Naive thymus-derived CD4-positive, alpha-beta T cell (primary cell): ENCODE measurements at regions of chr5 and their contacts with region 1.

Region 1: GRCh38 chr5:141512390-141512910 is 23.6 kb downstream of the PCDHGC5 start:
- DNase-seq: peak; percentile 48 to 87 (median 74)
- ATAC-seq: peak; percentile 79
- H3K4me3 ChIP-seq: peak overlapping the region; percentile 59
- H3K4me3 Mint-ChIP-seq: peak overlapping the region; percentile 84 to 97 (median 90)
- H3K27ac ChIP-seq: peak overlapping the region; percentile 39
- H3K27ac Mint-ChIP-seq: peak overlapping the region; percentile 27 to 83 (median 58)
- H3K4me1 ChIP-seq: peaks cover 0 to 13% of the 10 kb centered on the region in 2 donors
- H3K4me1 Mint-ChIP-seq: peaks cover 21 to 35% (median 26%) of the 10 kb centered on the region in 7 donors
- H3K27me3 ChIP-seq: no peaks in the 10 kb centered on the region
- H3K27me3 Mint-ChIP-seq: peaks cover 0 to 3% (median 0%) of the 10 kb centered on the region in 5 donors

Region 2: DNA sequence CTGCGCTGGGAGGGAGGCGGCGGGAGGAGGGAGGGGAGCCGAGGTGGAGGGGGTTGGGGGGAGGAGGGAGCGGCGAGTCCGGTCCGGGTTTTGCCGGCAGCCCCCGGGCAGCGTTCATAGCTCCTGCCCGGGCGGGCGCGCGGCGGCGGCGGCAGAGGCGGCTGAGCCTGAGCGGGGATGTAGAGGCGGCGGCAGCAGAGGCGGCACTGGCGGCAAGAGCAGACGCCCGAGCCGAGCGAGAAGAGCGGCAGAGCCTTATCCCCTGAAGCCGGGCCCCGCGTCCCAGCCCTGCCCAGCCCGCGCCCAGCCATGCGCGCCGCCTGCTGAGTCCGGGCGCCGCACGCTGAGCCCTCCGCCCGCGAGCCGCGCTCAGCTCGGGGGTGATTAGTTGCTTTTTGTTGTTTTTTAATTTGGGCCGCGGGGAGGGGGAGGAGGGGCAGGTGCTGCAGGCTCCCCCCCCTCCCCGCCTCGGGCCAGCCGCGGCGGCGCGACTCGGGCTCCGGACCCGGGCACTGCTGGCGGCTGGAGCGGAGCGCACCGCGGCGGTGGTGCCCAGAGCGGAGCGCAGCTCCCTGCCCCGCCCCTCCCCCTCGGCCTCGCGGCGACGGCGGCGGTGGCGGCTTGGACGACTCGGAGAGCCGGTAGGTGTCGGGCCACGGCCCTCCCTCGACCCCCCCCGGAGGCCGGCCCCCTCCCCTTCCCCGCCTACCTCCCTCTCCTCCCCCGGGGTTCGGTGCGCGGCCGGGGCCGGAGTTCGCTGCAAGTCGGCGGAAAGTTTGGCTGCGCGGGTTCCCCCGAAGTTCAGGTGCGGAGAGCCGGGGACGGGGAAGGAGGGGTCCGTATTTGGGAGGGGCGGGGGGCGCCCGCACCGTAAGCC is 1864.0 kb before region 1 on chr5 and contains the start of gene CXXC5:
- CTCF ChIA-PET with region 1: no interaction called
- POLR2A ChIA-PET with region 1: no interaction called
- intact Hi-C with region 1: no loop called
- DNase-seq: peak in 5 of 9 donors; percentile 33 to 67 (median 44)
- ATAC-seq: peak; percentile 58
- H3K4me3 ChIP-seq: peak within 1 kb of the TSS; percentile 43
- H3K4me3 Mint-ChIP-seq: peak within 1 kb of the TSS; percentile 33 to 94 (median 78)
- H3K27ac ChIP-seq: no peak within 1 kb of the TSS
- H3K27ac Mint-ChIP-seq: no peak within 1 kb of the TSS
- H3K4me1 ChIP-seq: peaks cover 19 to 39% of the 10 kb centered on the region in 2 donors
- H3K4me1 Mint-ChIP-seq: peaks cover 15 to 52% (median 32%) of the 10 kb centered on the region in 7 donors
- H3K27me3 ChIP-seq: peaks cover 3 to 30% of the 10 kb centered on the region in 2 donors
- H3K27me3 Mint-ChIP-seq: peaks cover 30 to 70% (median 42%) of the 10 kb centered on the region in 5 donors
- total RNA-seq, gene CXXC5: 0.73 to 21.4 (median 3.5) TPM

Region 3: DNA sequence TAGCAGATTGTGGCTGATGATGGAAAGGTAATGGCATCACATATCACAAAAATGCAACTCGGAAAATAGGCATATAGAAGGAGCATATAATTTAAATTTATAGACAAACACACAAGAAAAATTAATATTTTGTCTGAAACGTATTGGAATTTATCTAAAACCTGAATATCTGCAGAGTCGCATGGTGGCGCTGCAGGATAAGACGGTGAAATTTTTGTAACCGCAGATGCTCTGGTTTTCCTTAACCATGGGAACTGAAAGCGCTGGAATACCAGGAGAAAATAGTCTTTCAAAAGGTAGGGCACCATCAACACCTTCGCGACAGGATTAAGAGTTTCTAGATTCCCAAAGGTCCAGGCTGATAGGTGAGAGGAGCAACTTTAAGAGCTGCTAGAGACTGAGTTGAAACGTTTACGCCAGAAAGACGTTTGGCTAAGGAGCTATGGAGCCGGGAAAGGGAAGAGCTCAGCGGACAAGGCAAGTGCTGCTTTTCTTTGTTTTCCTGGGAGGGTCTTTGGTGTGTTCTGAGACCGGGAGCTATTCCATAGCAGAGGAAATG is 278.3 kb before region 1 on chr5:
- CTCF ChIA-PET with region 1: no interaction called
- POLR2A ChIA-PET with region 1: no interaction called
- intact Hi-C with region 1: no loop called
- DNase-seq: no peak
- ATAC-seq: no peak
- H3K4me3 ChIP-seq: no peak overlapping the region
- H3K4me3 Mint-ChIP-seq: peak overlapping the region in 1 of 10 donors; percentile 13
- H3K27ac ChIP-seq: no peak overlapping the region
- H3K27ac Mint-ChIP-seq: no peak overlapping the region
- H3K4me1 ChIP-seq: no peaks in the 10 kb centered on the region
- H3K4me1 Mint-ChIP-seq: no peaks in the 10 kb centered on the region
- H3K27me3 ChIP-seq: peaks cover 0 to 4% of the 10 kb centered on the region in 2 donors
- H3K27me3 Mint-ChIP-seq: peaks cover 7 to 50% (median 41%) of the 10 kb centered on the region in 5 donors

Region 4: DNA sequence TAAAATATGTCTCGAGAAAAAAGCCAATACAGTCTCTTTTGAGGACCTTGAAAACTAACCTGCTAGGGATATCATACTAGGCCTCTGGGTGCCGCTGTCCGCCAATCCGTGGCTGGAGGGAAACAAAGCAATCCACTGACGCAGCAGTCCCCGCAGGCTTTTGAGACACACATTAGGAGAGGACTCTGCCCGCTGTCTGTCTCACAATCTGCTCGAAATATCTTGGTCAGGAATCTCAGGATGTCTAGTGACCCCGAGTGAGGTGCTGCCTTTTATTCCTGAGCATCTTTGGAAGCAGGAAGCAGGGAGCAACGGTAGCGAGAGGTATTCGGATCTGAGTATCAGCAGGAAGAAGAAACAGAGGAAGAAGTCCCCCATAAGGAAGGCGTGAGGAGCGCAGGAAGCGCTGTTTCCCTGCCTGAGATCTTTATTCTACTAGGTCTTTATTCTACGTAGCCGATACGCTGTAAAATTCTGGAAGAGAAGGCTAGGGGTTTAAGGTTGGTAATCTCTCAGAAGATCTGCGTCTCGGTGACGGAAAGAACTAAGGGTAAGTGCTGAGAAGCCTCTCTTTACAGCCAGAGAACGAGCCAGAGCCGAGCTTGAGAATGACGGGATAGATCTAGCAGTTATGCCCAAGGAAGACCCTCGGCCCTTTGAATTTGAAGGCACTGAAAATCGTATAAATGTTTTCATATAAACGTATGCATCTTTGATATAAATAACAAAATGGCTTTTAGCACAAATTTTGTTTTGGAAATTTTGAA is 186.2 kb before region 1 on chr5:
- CTCF ChIA-PET with region 1: interaction called, 15 read pairs
- POLR2A ChIA-PET with region 1: no interaction called
- intact Hi-C with region 1: loop called in 1 of 2 experiments (anchors 1 kb)
- DNase-seq: peak; percentile 39 to 75 (median 57)
- ATAC-seq: peak; percentile 95
- H3K4me3 ChIP-seq: peak overlapping the region; percentile 73
- H3K4me3 Mint-ChIP-seq: peak overlapping the region; percentile 78 to 98 (median 90)
- H3K27ac ChIP-seq: peak overlapping the region; percentile 53
- H3K27ac Mint-ChIP-seq: peak overlapping the region; percentile 17 to 95 (median 80)
- H3K4me1 ChIP-seq: no peaks in the 10 kb centered on the region
- H3K4me1 Mint-ChIP-seq: peaks cover 0 to 15% (median 7%) of the 10 kb centered on the region in 7 donors
- H3K27me3 ChIP-seq: peaks cover 0 to 5% of the 10 kb centered on the region in 2 donors
- H3K27me3 Mint-ChIP-seq: peaks cover 8 to 48% (median 41%) of the 10 kb centered on the region in 5 donors

Region 5: DNA sequence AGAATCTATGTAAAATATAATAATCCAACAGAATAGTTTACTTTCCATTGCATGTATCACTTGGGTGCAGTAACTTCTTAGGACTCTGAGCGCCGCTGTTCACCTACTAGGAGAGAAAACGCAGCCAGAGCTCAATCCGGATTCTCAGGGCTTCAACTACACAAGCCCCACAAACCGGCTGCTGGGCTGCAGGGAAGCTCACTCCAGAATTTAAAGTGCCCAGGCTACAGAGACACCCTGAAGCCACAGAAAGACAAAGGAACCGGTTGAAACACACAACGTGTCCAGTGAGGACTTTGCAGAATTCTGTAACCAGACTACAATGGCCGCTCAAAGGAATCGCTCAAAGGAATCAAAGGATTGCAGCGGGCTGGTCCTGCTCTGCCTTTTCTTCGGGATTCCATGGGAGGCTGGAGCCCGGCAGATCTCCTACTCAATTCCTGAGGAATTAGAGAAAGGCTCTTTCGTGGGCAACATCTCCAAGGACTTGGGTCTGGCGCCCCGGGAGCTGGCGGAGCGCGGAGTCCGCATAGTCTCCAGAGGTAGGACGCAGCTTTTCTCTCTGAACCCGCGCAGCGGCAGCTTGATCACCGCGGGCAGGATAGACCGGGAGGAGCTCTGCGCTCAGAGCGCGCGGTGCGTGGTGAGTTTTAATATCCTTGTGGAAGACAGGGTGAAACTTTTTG is 99.5 kb before region 1 on chr5 and contains the start of gene PCDHGA10:
- CTCF ChIA-PET with region 1: interaction called, 11 read pairs
- POLR2A ChIA-PET with region 1: no interaction called
- intact Hi-C with region 1: loop called (anchors 1 kb)
- DNase-seq: peak in 7 of 9 donors; percentile 38 to 66 (median 52)
- ATAC-seq: peak; percentile 84
- H3K4me3 ChIP-seq: peak within 1 kb of the TSS; percentile 73
- H3K4me3 Mint-ChIP-seq: peak within 1 kb of the TSS; percentile 83 to 92 (median 87)
- H3K27ac ChIP-seq: no peak within 1 kb of the TSS
- H3K27ac Mint-ChIP-seq: peak within 1 kb of the TSS in 2 of 9 donors; percentile 54 to 56
- H3K4me1 ChIP-seq: peaks cover 0 to 5% of the 10 kb centered on the region in 2 donors
- H3K4me1 Mint-ChIP-seq: peaks cover 13 to 27% (median 19%) of the 10 kb centered on the region in 7 donors
- H3K27me3 ChIP-seq: peaks cover 23% of the 10 kb centered on the region in 2 donors
- H3K27me3 Mint-ChIP-seq: peaks cover 69 to 80% (median 75%) of the 10 kb centered on the region in 5 donors
- total RNA-seq, gene PCDHGA10: 0.11 to 0.39 (median 0.24) TPM

Region 6: GRCh38 chr5:141524604-141525597 is 12.5 kb after region 1 on chr5:
- CTCF ChIA-PET with region 1: interaction called, 30 read pairs
- POLR2A ChIA-PET with region 1: interaction called, 3 read pairs
- intact Hi-C with region 1: loop called (anchors 1 kb)
- DNase-seq: peak; percentile 18 to 64 (median 43)
- ATAC-seq: peak; percentile 88
- H3K4me3 ChIP-seq: no peak overlapping the region
- H3K4me3 Mint-ChIP-seq: peak overlapping the region in 1 of 10 donors; percentile 21
- H3K27ac ChIP-seq: no peak overlapping the region
- H3K27ac Mint-ChIP-seq: peak overlapping the region in 8 of 9 donors; percentile 19 to 80 (median 54)
- H3K4me1 ChIP-seq: peaks cover 0 to 6% of the 10 kb centered on the region in 2 donors
- H3K4me1 Mint-ChIP-seq: peaks cover 6 to 28% (median 16%) of the 10 kb centered on the region in 7 donors
- H3K27me3 ChIP-seq: no peaks in the 10 kb centered on the region
- H3K27me3 Mint-ChIP-seq: no peaks in the 10 kb centered on the region

Region 7: GRCh38 chr5:141636413-141637122 is 124.1 kb after region 1 on chr5 and contains the starts of genes HDAC3 and RELL2:
- CTCF ChIA-PET with region 1: no interaction called
- POLR2A ChIA-PET with region 1: no interaction called
- intact Hi-C with region 1: loop called in 1 of 2 experiments (anchors 5 kb)
- DNase-seq: peak; percentile 86 to 99 (median 94)
- ATAC-seq: peak; percentile 98
- H3K4me3 ChIP-seq: peak within 1 kb of the TSS; percentile 81
- H3K4me3 Mint-ChIP-seq: peak within 1 kb of the TSS; percentile 89 to 98 (median 92)
- H3K27ac ChIP-seq: peak within 1 kb of the TSS; percentile 88
- H3K27ac Mint-ChIP-seq: peak within 1 kb of the TSS; percentile 72 to 95 (median 92)
- H3K4me1 ChIP-seq: peaks cover 23 to 24% of the 10 kb centered on the region in 2 donors
- H3K4me1 Mint-ChIP-seq: peaks cover 35 to 56% (median 46%) of the 10 kb centered on the region in 7 donors
- H3K27me3 ChIP-seq: no peaks in the 10 kb centered on the region
- H3K27me3 Mint-ChIP-seq: no peaks in the 10 kb centered on the region
- total RNA-seq, gene HDAC3: 70.0 to 92.8 (median 79.0) TPM
- total RNA-seq, gene RELL2: 14.3 to 21.7 (median 17.5) TPM